ENCODE measurements at regions of chr3 and their contacts with region 1.

Region 1: GRCh38 chr3:66253790-66254620 is 33.2 kb downstream of the SLC25A26 start:
- DNase-seq: no peak
- ATAC-seq: peak in 2 of 8 donors; percentile 11 to 29
- H3K4me3 ChIP-seq: no peak overlapping the region
- H3K27ac ChIP-seq: no peak overlapping the region
- H3K4me1 ChIP-seq: no peaks in the 10 kb centered on the region
- H3K27me3 ChIP-seq: no peaks in the 10 kb centered on the region
- CTCF ChIP-seq: peak; percentile 49 to 89 (median 80)

Region 2: GRCh38 chr3:66107855-66108254 is 146.2 kb before region 1 on chr3:
- intact Hi-C with region 1: no loop called
- DNase-seq: peak in 1 of 2 donors; percentile 5
- ATAC-seq: no peak
- H3K4me3 ChIP-seq: no peak overlapping the region
- H3K27ac ChIP-seq: no peak overlapping the region
- H3K4me1 ChIP-seq: peaks cover 0 to 12% (median 6%) of the 10 kb centered on the region in 9 donors
- H3K27me3 ChIP-seq: no peaks in the 10 kb centered on the region
- CTCF ChIP-seq: no peak

Region 3: DNA sequence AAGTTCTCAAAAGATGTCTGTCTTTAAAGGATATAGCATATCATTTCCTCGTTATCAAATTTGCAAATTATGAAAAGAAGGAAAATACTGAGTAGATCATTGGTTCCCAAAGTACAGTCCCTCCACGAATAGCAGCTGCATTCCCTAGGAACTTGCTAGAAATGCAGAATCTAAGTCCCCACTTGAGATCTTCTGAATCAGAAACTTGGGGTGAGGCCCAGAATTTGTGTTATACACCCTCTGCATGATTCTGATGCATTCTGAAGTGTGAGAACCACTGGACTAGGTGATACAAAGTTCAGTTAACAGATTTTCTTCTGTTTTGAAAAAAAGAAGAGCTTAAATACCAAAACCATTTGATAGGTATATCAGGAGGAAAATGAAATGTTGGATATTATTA is 43.9 kb after region 1 on chr3:
- intact Hi-C with region 1: loop called in 1 of 10 experiments (anchors 1 kb)
- DNase-seq: peak in 1 of 2 donors; percentile 25
- ATAC-seq: peak in 6 of 8 donors; percentile 35 to 74 (median 50)
- H3K4me3 ChIP-seq: no peak overlapping the region
- H3K27ac ChIP-seq: peak overlapping the region in 5 of 10 donors; percentile 11 to 52 (median 42)
- H3K4me1 ChIP-seq: peaks cover 2 to 23% (median 16%) of the 10 kb centered on the region in 9 donors
- H3K27me3 ChIP-seq: no peaks in the 10 kb centered on the region
- CTCF ChIP-seq: no peak

Region 4: GRCh38 chr3:66822186-66823008 is 568.4 kb after region 1 on chr3:
- intact Hi-C with region 1: loop called in 8 of 10 experiments (anchors 2 to 5 kb)
- DNase-seq: peak; percentile 17 to 53
- ATAC-seq: peak; percentile 46 to 78 (median 73)
- H3K4me3 ChIP-seq: no peak overlapping the region
- H3K27ac ChIP-seq: no peak overlapping the region
- H3K4me1 ChIP-seq: no peaks in the 10 kb centered on the region
- H3K27me3 ChIP-seq: peaks cover 0 to under 1% (median 0%) of the 10 kb centered on the region in 7 donors
- CTCF ChIP-seq: peak; percentile 38 to 86 (median 74)